Lower leg skin (tissue), 4 donors: ENCODE measurements at regions of chr2 and their contacts with region 1.

Region 1: DNA sequence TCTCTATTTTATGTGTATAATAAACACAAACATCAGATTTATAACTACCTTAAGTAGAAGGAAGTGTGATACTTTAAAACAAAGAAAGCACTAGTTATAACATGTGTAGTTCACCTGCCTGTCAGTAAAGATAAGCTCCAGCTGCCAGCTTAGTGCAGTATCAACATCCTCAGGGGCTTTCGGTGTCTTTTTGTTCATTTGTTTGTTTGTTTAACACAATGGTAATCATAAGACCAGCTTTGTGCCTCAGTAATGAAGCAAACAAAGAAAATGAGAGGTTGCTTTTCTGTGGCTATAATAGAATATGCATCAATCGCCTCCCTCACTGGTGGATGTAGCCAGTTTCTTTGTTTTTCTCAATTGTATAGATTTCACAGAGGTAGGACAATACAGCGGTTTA is 1499.0 kb upstream of the TMEFF2 start:
- DNase-seq: no peak
- H3K4me3 ChIP-seq: no peak overlapping the region
- CTCF ChIP-seq: no peak
- POLR2A ChIP-seq: no peak

Region 2: DNA sequence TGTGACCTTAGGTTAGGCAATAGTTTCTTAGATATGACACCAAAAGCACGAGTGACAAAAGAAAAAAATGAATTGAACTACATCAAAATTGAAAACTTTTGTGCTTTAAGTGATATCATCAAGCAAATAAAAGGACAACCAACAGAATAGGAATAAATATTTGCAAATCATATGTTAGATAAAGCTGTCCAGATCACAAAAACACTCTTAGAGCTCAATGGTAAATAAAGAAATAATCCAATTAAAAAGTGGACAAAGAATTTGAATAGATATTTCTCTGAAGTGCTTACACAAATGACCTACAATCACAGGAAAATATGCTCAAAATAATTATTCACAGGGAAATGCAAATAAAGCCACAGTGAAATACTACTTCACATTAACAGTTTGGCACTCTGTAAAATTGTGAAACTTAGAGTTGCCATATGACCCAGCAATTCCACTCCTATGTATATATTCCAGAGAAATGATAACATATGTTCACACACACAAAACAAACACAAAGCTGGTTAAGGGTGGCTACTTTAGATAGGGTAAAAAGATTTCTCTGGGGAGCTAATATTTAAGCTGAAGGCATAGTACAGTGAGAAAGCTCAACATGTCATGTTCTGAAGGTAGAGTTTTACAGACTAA is 953.9 kb before region 1 on chr2:
- intact Hi-C with region 1: loop called (anchors 5 kb)
- DNase-seq: no peak
- H3K4me3 ChIP-seq: no peak overlapping the region
- CTCF ChIP-seq: no peak
- POLR2A ChIP-seq: no peak

Region 3: GRCh38 chr2:193640827-193641226 is 52.9 kb before region 1 on chr2:
- intact Hi-C with region 1: no loop called
- DNase-seq: no peak
- H3K4me3 ChIP-seq: no peak overlapping the region
- CTCF ChIP-seq: no peak
- POLR2A ChIP-seq: no peak

Region 4: GRCh38 chr2:193668557-193669323 is 25.0 kb before region 1 on chr2:
- intact Hi-C with region 1: no loop called
- DNase-seq: no peak
- H3K4me3 ChIP-seq: no peak overlapping the region
- CTCF ChIP-seq: no peak
- POLR2A ChIP-seq: no peak